ENCODE measurements at regions of chr14 and their contacts with region 1.

Region 1: GRCh38 chr14:35416108-35416750 is 11.7 kb upstream of the NFKBIA start:
- DNase-seq: no peak

Region 2: DNA sequence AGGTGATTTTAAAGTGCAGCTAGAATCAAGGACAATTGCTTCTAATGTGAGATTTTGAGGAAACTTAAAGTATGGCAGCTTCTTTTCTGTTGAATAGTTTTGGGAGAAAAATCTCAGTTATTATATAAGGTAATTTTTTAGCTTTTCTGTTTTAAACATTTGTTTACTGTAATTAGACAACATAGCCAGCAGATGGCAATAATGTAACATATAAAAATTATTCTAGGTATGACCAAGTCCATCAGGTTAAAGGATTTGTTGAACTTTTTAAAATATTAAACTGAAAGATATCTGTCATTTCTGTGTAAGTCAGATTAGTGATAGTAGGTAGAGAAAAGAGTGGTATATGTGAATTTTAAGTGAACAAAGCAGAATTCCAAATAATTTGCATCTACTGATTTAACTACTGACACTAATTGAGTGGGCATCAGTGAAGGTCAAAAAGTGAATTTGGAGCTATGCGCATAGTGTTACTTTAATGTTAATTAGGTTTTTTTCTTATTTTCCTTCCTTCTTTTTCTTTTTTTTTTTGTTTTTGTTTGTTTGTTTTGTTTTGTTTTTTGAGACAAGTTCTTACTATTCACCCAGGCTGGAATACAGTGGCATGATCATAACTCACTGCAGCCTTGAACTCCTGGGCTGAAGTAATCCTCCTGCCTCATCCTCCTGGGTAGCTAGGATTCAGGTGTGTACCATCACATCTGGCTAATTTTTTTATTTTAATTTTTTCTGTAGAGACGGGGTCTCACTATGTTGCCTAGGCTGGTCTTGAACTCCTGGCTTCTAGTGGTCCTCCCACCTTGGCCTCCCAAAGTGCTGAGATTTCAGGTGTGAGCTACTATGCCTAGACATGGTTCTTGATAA is 275.3 kb before region 1 on chr14:
- intact Hi-C with region 1: loop called (anchors 2 kb)
- DNase-seq: no peak

Region 3: DNA sequence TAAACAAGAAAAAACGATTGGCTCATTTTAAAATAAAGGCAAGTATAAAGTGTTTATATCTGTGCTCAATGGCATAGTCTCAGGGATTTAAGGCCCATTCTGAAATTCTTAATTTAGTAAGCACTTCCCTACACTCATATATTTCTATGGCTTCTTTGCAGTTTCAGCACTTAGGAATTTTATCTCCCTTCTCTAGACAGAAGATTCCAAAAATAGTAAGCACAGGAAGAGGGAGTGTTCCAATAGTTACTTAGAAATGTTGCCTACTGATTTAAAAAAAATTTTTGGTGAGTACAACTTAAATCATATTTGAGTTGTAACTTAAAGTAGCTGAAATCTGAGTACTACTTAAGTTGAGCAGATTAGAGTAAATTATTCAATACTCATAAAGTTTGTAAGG is 137.6 kb after region 1 on chr14:
- intact Hi-C with region 1: no loop called
- DNase-seq: no peak

Region 4: GRCh38 chr14:35687335-35687939 is 271.2 kb after region 1 on chr14:
- intact Hi-C with region 1: loop called (anchors 10 kb)
- DNase-seq: no peak

Measured in cardiac septum (tissue), 1 donor.